ENCODE measurements at regions of chr5 and their contacts with region 1.

Region 1: GRCh38 chr5:103808464-103809106 is 246.0 kb upstream of the NUDT12 start:
- DNase-seq: no peak
- H3K4me3 ChIP-seq: no peak overlapping the region
- CTCF ChIP-seq: no peak
- POLR2A ChIP-seq: no peak

Region 2: GRCh38 chr5:103840600-103840999 is 32.0 kb after region 1 on chr5:
- intact Hi-C with region 1: loop called (anchors 2 kb)
- DNase-seq: no peak
- H3K4me3 ChIP-seq: no peak overlapping the region
- CTCF ChIP-seq: no peak
- POLR2A ChIP-seq: no peak